ENCODE measurements at regions of chr20 and their contacts with region 1.

Region 1: DNA sequence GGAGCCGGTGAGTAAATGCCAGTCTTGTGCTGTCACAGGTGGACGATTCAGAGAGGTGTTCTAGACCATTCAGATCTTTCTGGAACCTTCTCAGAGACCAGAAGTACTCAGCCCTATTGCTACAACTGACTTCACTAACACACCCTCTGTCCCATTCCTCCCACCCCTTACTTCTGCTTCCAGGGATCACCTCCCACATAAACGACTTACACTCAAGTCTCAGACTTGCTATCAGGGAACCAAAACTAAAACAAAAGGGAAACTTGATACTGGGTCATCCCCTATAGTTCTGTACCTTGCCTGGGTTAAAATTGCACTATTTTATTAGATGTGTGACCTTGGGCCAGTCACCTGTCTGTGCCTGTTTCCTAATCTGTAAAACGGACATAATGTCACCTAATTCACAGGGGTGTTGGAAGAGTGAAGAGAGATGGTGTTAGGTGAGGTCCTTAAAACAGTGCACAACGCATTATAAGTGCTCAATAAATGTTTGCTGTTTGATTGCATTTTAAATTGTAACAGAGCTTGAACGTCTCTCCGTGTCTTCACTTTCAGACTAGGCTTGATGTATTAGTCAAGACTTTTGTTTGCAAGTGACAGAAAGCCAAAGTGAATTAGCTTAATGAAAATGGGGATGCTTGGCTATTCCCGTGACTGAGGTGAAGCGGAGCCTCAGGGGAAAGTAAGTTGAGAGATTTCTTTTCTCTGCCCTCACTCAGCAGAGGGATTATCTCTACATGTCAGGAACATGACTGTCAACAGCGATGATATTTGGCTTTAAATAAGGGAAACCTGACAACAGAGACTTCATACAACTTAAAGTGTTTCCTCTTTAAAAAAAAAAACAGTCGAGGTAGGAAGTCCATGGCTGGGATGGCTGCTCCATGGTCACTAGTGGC is 3.0 kb upstream of the SRXN1 start:
- DNase-seq: no peak
- ATAC-seq: no peak
- H3K4me3 Mint-ChIP-seq: no peak overlapping the region
- H3K27ac Mint-ChIP-seq: no peak overlapping the region
- H3K4me1 Mint-ChIP-seq: peaks cover 18% of the 10 kb centered on the region
- H3K27me3 Mint-ChIP-seq: peaks cover 40% of the 10 kb centered on the region

Region 2: DNA sequence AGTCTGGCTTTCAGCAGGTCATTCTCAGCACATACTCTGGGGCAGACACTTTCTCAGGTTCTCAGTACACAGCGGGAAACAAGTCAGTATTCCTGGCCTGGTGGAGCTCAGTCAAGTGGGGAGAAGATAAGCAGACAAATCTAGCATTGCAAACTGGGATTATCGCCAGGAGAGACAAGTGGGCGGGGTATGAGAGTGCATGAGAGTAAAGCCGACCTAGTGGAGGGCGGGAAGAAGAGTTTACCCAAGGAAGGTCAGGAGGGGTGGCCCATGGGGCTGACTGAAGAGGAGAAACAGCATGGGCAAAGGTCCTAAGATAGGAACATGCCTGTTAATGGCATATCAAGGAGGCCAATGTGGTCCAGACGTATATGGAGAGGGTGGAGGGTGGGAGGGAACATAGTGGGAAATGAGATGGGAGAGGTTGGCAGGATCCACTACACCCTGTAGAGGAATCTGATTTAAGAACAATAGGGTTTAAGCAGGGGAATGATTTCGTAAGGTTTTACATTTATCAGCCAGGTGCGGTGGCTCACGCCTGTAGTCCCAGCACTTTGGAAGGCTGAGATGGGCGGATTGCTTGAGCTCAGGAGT is 99.9 kb before region 1 on chr20:
- CTCF ChIA-PET with region 1: no interaction called
- POLR2A ChIA-PET with region 1: no interaction called
- DNase-seq: no peak
- ATAC-seq: no peak
- H3K4me3 Mint-ChIP-seq: no peak overlapping the region
- H3K27ac Mint-ChIP-seq: no peak overlapping the region
- H3K4me1 Mint-ChIP-seq: no peaks in the 10 kb centered on the region
- H3K27me3 Mint-ChIP-seq: peaks cover 33% of the 10 kb centered on the region

Region 3: DNA sequence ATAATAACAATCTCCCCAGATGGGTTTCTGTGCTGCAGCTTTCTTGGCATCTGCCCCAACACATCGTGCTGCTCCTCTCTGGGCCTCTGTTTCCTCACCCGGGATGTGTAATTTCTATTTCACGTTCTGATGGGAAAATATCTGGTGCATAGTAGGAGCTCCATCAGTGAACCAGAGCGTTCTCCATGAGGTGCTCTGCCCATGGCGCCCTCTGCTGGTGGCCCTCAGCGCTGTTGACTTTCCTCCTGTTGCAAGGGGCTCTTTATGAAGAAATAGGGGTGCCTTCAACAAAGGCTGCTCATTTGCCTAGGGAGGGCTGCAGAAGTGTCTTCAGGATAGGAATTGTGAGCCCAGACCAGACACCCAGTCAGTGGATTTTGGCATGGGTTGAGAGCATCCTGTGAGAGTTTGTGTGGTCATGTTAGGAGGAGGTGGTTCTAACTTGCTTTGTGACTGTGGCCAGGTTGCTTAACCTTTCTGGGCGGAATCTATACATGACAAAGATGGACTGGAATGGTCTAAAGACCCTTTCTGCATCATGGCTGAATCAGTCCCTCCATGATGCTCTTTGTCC is 11.5 kb after region 1 on chr20:
- CTCF ChIA-PET with region 1: interaction called, 12 read pairs
- POLR2A ChIA-PET with region 1: no interaction called
- DNase-seq: peak; percentile 75
- ATAC-seq: peak; percentile 70
- H3K4me3 Mint-ChIP-seq: no peak overlapping the region
- H3K27ac Mint-ChIP-seq: no peak overlapping the region
- H3K4me1 Mint-ChIP-seq: peaks cover 18% of the 10 kb centered on the region
- H3K27me3 Mint-ChIP-seq: peaks cover 50% of the 10 kb centered on the region

Measured in activated CD8-positive, alpha-beta T cell treated with anti-CD3 and anti-CD28 coated beads, Interleukin-2, amount 10 ng/mL, durations not matched to agents 7 days and 5 days (primary cell).